ENCODE measurements at regions of chr20 and their contacts with region 1.

Region 1: GRCh38 chr20:44609511-44610312 is 27.3 kb downstream of the PKIG start:
- DNase-seq: peak; percentile 76
- ATAC-seq: peak; percentile 98
- H3K4me3 ChIP-seq: peak overlapping the region in 1 of 2 experiments; percentile 27; a peak in 3 of 4 replicates
- H3K27ac ChIP-seq: peak overlapping the region; percentile 56
- H3K4me1 ChIP-seq: peaks cover 5 to 13% of the 10 kb centered on the region in 2 experiments
- H3K27me3 ChIP-seq: no peaks in the 10 kb centered on the region
- CTCF ChIP-seq: peak; percentile 93 to 99 (median 96)
- POLR2A ChIP-seq: peak; percentile 31
- RAD21 ChIP-seq: peak; percentile 98

Region 2: GRCh38 chr20:44361021-44361420 is 248.7 kb before region 1 on chr20:
- CTCF ChIA-PET with region 1: no interaction called
- POLR2A ChIA-PET with region 1: no interaction called
- RAD21 ChIA-PET with region 1: no interaction called
- intact Hi-C with region 1: no loop called
- DNase-seq: no peak
- ATAC-seq: no peak
- H3K4me3 ChIP-seq: no peak overlapping the region
- H3K27ac ChIP-seq: no peak overlapping the region
- H3K4me1 ChIP-seq: no peaks in the 10 kb centered on the region; a peak in 1 of 4 replicates
- H3K27me3 ChIP-seq: no peaks in the 10 kb centered on the region
- CTCF ChIP-seq: no peak
- POLR2A ChIP-seq: no peak
- RAD21 ChIP-seq: no peak

Region 3: DNA sequence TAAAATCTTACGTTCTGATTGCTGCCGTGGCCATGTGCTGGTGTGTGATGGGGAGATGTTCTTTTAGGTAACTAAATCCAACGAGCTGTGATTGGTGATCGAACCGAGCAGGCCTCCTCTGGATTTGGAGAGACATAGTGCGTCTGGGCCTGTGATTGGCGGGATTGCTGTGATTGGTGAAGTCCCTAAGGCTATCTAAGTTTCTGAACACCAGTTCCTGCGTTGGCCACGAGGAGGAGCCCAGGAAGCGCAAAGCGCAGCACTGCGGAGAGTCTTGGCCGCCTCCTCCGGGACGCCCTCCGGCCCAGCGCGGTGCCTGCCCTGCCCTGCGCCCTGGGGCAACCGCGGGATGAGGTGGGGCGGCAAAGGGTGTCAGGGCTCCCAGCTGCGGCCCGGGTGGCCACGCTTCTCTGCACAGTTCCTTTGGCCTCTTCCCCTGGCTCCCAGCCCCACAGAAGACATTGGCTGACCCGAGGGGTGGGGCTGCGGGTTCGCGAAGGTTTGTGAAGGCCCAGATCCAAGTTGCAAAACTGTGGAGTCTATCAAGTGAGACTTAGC is 221.2 kb before region 1 on chr20:
- CTCF ChIA-PET with region 1: interaction called, 20 read pairs
- POLR2A ChIA-PET with region 1: interaction called, 5 read pairs
- RAD21 ChIA-PET with region 1: no interaction called
- intact Hi-C with region 1: loop called (anchors 1 kb)
- DNase-seq: peak; percentile 88
- ATAC-seq: peak; percentile 94
- H3K4me3 ChIP-seq: no peak overlapping the region
- H3K27ac ChIP-seq: no peak overlapping the region
- H3K4me1 ChIP-seq: peaks cover 2 to 21% of the 10 kb centered on the region in 2 experiments; a peak in 2 of 4 replicates
- H3K27me3 ChIP-seq: no peaks in the 10 kb centered on the region
- CTCF ChIP-seq: peak; percentile 86 to 92 (median 89)
- POLR2A ChIP-seq: no peak
- RAD21 ChIP-seq: peak; percentile 99

Region 4: GRCh38 chr20:44475694-44476560 is 133.8 kb before region 1 on chr20 and contains the start of gene TTPAL:
- CTCF ChIA-PET with region 1: interaction called, 8 read pairs
- POLR2A ChIA-PET with region 1: no interaction called
- RAD21 ChIA-PET with region 1: no interaction called
- intact Hi-C with region 1: loop called (anchors 2 kb)
- DNase-seq: peak; percentile 73
- ATAC-seq: peak; percentile 97
- H3K4me3 ChIP-seq: peak within 1 kb of the TSS; percentile 77 to 94
- H3K27ac ChIP-seq: peak within 1 kb of the TSS; percentile 59
- H3K4me1 ChIP-seq: peaks cover 3 to 20% of the 10 kb centered on the region in 2 experiments; a peak in 2 of 4 replicates
- H3K27me3 ChIP-seq: no peaks in the 10 kb centered on the region
- CTCF ChIP-seq: peak in 1 of 3 experiments; percentile 26; a peak in 1 of 6 replicates
- POLR2A ChIP-seq: peak; percentile 94
- RAD21 ChIP-seq: peak; percentile 46
- total RNA-seq, gene TTPAL: 20.4 TPM

Measured in HCT116 (cell line).